Right ventricle myocardium superior (tissue), 1 donor: ENCODE measurements at regions of chr11 and their contacts with region 1.

Region 1: GRCh38 chr11:60775420-60775961 is 9.6 kb upstream of the MS4A10 start:
- DNase-seq: peak; percentile 77
- ATAC-seq: peak; percentile 88

Region 2: DNA sequence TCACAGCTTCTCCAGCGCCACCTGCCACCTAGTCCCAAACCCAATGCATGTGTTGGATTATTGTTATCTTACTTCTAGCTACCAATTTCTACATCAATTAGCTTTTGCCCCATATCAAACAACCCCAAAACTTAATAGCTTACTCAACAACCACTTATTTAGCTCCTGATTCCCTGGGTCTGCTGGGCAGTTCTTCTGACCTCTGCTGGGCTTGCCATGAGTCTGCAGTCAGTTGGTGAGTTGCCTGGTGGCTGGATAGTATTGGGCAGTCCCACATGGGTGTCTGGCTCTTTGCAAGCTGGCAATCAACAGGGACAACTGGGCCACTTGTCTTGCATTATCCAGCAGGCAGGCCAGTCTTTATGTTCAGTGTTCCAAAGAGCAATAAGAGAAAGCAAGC is 32.4 kb before region 1 on chr11:
- intact Hi-C with region 1: no loop called
- DNase-seq: no peak
- ATAC-seq: no peak

Region 3: GRCh38 chr11:60899046-60899936 is 123.8 kb after region 1 on chr11:
- intact Hi-C with region 1: loop called (anchors 5 kb)
- DNase-seq: no peak
- ATAC-seq: peak; percentile 69

Region 4: DNA sequence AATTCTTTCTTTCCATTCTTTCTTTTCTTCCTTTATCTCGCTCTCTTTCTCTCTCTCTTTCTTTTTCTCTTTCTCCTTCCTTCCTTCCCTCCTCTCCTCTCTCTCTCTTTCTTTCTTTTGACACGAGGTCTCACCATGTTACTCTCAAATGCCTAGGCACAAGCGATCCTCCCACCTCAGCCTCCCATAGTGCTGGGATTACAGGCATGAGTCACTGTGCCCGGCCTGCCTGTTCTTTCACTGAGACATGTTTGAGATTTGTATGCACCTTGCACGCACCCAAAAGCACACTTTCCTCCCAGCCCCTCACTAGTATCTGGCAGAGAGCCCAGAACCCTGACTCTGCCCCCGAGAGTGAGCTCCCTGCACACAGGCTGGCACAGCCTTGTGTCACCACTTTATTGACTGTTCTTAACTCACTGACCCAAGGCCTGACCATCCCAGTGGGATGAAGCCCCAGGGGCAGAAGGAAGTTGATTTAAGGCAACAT is 252.8 kb after region 1 on chr11:
- intact Hi-C with region 1: no loop called
- DNase-seq: peak; percentile 17
- ATAC-seq: no peak